Gastrocnemius medialis (tissue), 4 donors: ENCODE measurements at regions of chr5 and their contacts with region 1.

Region 1: DNA sequence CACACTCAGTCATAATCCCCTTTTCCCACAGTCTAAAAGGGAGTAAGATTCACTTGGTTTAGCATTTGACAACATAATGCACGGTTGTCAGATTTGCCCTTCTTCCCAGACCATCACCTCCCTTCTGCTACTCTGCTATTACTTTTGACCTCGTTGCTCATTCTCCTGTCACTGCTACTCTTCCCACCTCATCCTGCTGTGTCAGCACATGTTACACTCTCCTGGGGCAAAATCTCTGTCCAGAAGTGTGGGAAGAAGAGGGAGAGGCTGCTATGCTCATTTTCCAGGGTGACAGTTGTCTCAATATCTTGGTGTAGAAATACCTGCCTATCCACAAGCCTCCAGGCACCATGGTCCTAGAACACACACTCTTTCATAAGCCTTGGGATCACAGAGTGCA is 449.9 kb upstream of the PIK3R1 start:
- DNase-seq: no peak
- ATAC-seq: no peak
- H3K4me3 ChIP-seq: no peak overlapping the region
- H3K27ac ChIP-seq: no peak overlapping the region
- H3K4me1 ChIP-seq: peaks cover 3 to 4% of the 10 kb centered on the region in 2 donors
- H3K27me3 ChIP-seq: no peaks in the 10 kb centered on the region
- CTCF ChIP-seq: no peak
- POLR2A ChIP-seq: no peak

Region 2: GRCh38 chr5:67724412-67725135 is 41.1 kb before region 1 on chr5:
- in situ Hi-C with region 1: no loop called
- intact Hi-C with region 1: loop called (anchors 5 kb)
- DNase-seq: no peak
- ATAC-seq: no peak
- H3K4me3 ChIP-seq: no peak overlapping the region
- H3K27ac ChIP-seq: no peak overlapping the region
- H3K4me1 ChIP-seq: no peaks in the 10 kb centered on the region
- H3K27me3 ChIP-seq: no peaks in the 10 kb centered on the region
- CTCF ChIP-seq: no peak
- POLR2A ChIP-seq: no peak